Ovary (tissue), 10 donors: ENCODE measurements at regions of chr20 and their contacts with region 1.

Region 1: GRCh38 chr20:38165089-38165989 is at the start of gene TGM2:
- DNase-seq: peak; percentile 70 to 84 (median 71)
- H3K4me3 ChIP-seq: peak within 1 kb of the TSS; percentile 40
- H3K27ac ChIP-seq: peak within 1 kb of the TSS in 1 of 2 donors; percentile 22
- H3K4me1 ChIP-seq: peaks cover 13% of the 10 kb centered on the region
- H3K27me3 ChIP-seq: no peaks in the 10 kb centered on the region
- CTCF ChIP-seq: peak; percentile 83 to 84 (median 83)
- EP300 ChIP-seq: no peak
- POLR2A ChIP-seq: no peak
- total RNA-seq, gene TGM2: 15.0 to 320 (median 52.8) TPM

Region 2: DNA sequence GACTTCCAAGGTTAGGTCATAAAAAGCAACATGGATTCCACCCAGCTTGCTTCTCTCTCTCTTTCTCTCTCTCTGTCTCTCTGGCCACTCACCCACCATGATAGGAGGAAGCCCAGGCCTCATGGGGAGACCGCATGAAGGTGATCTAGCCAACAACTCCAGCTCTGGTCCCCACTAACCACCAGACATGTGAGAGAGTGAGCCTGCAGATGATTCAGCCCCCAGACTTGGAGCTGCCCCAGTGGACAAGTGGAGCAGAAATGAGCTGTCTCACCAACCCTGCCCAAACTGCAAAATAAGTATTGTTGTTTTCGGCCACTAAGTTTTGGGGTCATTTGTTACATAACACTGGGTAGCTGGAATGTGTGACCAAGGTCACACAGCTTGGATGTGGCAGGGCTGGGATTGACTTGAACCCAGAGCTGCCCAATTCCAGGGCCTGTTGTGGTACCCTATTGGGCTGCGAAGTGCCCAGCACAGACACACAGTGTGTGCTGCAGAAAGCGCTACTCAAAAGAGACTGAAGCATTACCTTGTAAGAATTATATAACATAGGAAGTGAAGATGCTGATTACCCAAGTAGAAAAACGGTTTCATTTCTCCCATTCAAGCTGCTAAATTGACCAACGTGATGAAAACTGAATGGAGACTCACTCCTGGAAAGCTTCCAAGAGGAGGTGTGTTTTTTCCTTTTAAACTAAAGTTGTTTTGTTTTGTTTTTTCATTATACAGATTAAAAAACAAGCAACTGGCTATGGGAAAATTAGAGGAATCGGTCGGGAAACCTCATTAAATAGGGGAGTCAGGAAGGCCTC is 1298.5 kb before region 1 on chr20:
- intact Hi-C with region 1: no loop called
- DNase-seq: no peak
- H3K4me3 ChIP-seq: no peak overlapping the region
- H3K27ac ChIP-seq: peak overlapping the region in 1 of 2 donors; percentile 3
- H3K4me1 ChIP-seq: peaks cover 3% of the 10 kb centered on the region
- H3K27me3 ChIP-seq: no peaks in the 10 kb centered on the region
- CTCF ChIP-seq: no peak
- EP300 ChIP-seq: no peak
- POLR2A ChIP-seq: no peak

Region 3: DNA sequence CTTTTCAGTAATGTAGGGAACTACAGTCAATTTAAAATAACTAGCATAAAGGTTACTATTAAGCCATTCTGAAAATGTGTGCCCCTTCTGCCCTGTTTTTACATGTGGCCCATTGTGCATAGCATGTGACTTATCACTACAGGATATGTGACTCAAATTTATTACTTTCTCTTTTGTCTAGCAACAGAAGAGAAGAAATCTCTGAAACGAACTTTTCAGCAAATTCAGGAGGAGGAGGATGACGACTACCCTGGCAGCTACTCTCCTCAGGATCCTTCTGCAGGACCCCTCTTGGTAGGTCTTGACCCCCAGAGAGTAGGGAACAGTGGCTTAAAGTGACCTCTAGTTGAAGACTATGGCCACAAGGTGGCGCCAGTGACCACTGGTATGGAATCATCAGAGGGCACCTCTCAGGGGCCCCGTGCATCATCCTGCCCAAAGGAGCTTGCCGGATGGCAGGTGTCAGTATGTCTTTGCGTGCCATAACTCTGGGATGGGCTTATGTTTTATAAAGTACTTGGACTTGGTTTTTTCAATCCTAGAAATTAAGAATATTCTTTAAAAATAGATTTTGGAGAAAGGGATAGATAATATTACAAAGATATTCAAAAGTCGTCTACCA is 107.9 kb before region 1 on chr20:
- intact Hi-C with region 1: loop called in 2 of 4 experiments (anchors 5 kb)
- DNase-seq: peak; percentile 74 to 89 (median 86)
- H3K4me3 ChIP-seq: no peak overlapping the region
- H3K27ac ChIP-seq: no peak overlapping the region
- H3K4me1 ChIP-seq: no peaks in the 10 kb centered on the region
- H3K27me3 ChIP-seq: no peaks in the 10 kb centered on the region
- CTCF ChIP-seq: peak; percentile 72 to 83 (median 77)
- EP300 ChIP-seq: no peak
- POLR2A ChIP-seq: no peak

Region 4: DNA sequence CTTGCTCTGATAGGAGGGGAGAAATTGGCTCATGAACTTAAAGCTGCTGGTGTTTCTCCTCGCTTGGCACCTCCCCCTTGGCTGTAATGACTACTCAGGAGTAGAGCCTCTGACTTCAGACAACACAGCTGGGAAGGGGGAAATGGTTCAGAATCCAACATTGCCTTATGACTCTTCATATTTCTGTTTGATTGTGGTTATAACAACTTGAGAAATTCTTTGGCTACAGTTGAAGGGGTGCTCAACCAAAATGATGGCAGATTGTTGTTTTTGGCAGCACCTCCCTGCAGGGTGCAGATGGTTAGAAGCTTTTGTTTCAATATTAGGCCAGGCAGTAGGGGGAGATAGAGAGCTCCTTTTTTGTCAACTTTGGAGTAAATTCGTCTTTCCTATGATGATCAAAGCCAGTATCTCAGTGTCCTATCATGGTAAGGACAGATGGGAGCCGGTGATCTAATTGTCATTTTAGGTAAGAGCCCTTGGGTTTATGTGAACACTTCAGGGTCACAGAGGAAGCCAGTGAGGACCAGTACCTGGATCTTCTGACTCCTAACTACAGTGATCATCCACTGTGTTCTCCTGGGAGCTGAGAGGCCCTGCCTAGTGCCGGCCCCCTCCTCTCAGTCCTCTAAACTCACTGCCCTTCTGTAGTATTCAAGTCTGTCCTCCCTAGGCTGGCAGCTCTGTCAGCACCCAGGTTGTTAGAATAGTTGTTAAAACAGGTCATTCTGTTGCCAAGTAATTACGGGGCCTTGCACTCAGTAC is 91.8 kb before region 1 on chr20:
- intact Hi-C with region 1: loop called in 2 of 4 experiments (anchors 2 to 5 kb)
- DNase-seq: peak; percentile 50 to 69 (median 58)
- H3K4me3 ChIP-seq: no peak overlapping the region
- H3K27ac ChIP-seq: peak overlapping the region in 1 of 2 donors; percentile 49
- H3K4me1 ChIP-seq: peaks cover 16% of the 10 kb centered on the region
- H3K27me3 ChIP-seq: no peaks in the 10 kb centered on the region
- CTCF ChIP-seq: peak; percentile 71 to 84 (median 73)
- EP300 ChIP-seq: no peak
- POLR2A ChIP-seq: no peak

Region 5: GRCh38 chr20:38113401-38114325 is 51.7 kb before region 1 on chr20:
- intact Hi-C with region 1: no loop called
- DNase-seq: no peak
- H3K4me3 ChIP-seq: no peak overlapping the region
- H3K27ac ChIP-seq: no peak overlapping the region
- H3K4me1 ChIP-seq: peaks cover 2% of the 10 kb centered on the region
- H3K27me3 ChIP-seq: no peaks in the 10 kb centered on the region
- CTCF ChIP-seq: no peak
- EP300 ChIP-seq: no peak
- POLR2A ChIP-seq: no peak

Region 6: DNA sequence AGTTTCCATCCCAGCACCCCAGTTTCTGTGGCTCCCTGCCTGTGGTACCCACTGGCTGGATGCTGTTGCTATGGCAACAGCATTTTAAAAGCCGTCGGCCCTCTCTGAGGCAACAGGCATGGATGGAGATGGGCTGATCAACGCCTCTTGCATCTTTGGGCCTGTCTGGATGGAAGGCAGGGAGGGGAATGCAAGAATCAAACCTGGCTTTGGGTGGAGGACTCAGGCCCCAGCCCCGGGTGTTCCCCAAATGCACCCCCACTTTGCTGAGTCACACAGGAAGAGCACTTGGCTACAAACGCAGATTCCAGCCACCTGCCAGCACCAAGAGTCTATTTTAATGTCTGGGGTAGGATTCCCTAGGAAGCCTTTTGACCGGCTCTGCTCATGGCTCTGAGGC is 45.4 kb after region 1 on chr20:
- intact Hi-C with region 1: loop called in 2 of 4 experiments (anchors 5 kb)
- DNase-seq: peak in 1 of 5 donors; percentile 28
- H3K4me3 ChIP-seq: no peak overlapping the region
- H3K27ac ChIP-seq: no peak overlapping the region
- H3K4me1 ChIP-seq: no peaks in the 10 kb centered on the region
- H3K27me3 ChIP-seq: no peaks in the 10 kb centered on the region
- CTCF ChIP-seq: no peak
- EP300 ChIP-seq: no peak
- POLR2A ChIP-seq: no peak

Region 7: DNA sequence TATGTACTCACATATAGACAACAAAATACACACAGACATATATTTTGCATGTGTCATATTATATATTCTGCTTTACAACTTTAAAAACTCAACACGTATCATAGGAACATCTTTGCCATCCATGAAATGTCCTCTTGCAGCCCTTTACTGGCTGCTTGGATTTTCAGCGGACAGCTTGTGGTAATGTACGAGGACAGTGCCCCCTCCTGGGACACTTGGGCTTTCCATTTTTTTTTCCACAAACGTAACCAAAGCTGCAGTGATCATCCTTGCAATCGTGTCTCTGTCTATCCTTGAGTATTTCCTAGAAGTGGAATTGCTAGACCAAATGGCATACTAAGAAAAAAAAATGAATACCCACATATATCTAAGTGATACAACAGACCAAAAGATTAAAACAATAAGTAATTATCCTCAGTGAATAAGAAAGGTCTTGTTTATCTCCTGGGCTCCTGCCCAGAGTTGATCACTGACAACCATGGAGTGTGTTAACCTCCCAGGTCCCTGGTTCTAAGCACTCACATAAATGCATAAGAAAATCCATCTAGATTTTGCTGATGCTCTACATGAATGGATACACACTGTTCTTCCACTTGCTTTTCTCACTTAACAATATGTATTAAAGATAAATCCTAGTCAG is 156.7 kb after region 1 on chr20:
- intact Hi-C with region 1: loop called in 1 of 4 experiments (anchors 5 kb)
- DNase-seq: peak; percentile 41 to 70 (median 56)
- H3K4me3 ChIP-seq: no peak overlapping the region
- H3K27ac ChIP-seq: no peak overlapping the region
- H3K4me1 ChIP-seq: no peaks in the 10 kb centered on the region
- H3K27me3 ChIP-seq: no peaks in the 10 kb centered on the region
- CTCF ChIP-seq: peak; percentile 30 to 75 (median 70)
- EP300 ChIP-seq: no peak
- POLR2A ChIP-seq: no peak